Heart right ventricle (tissue), 16 donors: ENCODE measurements at regions of chr16 and their contacts with region 1.

Region 1: DNA sequence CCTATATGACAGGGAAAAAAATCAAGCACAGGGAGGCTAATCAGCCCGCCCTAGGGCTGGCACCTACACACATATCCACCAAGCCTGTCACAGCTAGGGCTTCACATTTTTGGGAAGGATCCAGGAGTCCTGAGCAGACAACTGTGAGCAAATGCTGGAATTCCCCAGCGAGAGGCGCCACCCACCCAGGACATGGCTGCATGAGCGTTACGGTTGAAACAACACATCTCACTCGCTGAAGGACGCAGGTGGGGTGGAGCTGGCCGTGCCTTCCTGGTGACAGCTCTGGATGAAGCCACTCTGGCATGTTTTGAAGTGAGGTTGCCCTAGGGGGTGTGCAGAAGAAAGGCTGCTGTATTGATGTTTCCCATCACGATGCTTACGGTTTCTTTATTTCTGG is 315.1 kb upstream of the EEF2KMT start:
- DNase-seq: no peak
- ATAC-seq: no peak
- H3K4me3 ChIP-seq: no peak overlapping the region
- H3K27ac ChIP-seq: no peak overlapping the region
- H3K4me1 ChIP-seq: no peaks in the 10 kb centered on the region
- H3K27me3 ChIP-seq: peaks cover 0 to 3% (median 0%) of the 10 kb centered on the region in 7 donors
- CTCF ChIP-seq: no peak

Region 2: DNA sequence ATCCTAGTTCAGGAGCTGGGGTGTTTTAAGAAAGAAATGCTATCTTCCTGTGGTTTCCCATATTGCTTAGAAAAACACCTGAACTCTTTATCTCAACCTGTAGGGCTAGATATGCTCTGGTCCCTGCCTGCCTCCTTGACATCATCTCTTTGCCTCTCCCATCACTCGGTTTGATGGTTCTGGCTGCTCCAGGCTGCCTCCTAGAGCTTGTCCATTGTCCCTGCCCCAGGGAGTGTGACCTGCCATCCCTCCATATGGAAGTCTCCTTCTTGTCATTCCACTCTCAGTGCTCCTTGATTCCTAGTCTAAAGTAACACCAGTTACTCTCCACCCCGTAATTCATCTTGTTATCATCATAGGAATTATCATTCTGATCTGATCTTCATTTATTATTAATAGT is 53.8 kb after region 1 on chr16:
- intact Hi-C with region 1: loop called in 1 of 10 experiments (anchors 10 kb)
- DNase-seq: no peak
- ATAC-seq: no peak
- H3K4me3 ChIP-seq: no peak overlapping the region
- H3K27ac ChIP-seq: no peak overlapping the region
- H3K4me1 ChIP-seq: no peaks in the 10 kb centered on the region
- H3K27me3 ChIP-seq: peaks cover 0 to 18% (median 3%) of the 10 kb centered on the region in 7 donors
- CTCF ChIP-seq: no peak

Region 3: GRCh38 chr16:5551909-5552308 is 139.2 kb after region 1 on chr16:
- intact Hi-C with region 1: no loop called
- DNase-seq: no peak
- ATAC-seq: no peak
- H3K4me3 ChIP-seq: no peak overlapping the region
- H3K27ac ChIP-seq: no peak overlapping the region
- H3K4me1 ChIP-seq: no peaks in the 10 kb centered on the region
- H3K27me3 ChIP-seq: peaks cover 0 to 5% (median 0%) of the 10 kb centered on the region in 7 donors
- CTCF ChIP-seq: no peak

Region 4: GRCh38 chr16:5730783-5731385 is 318.2 kb after region 1 on chr16:
- intact Hi-C with region 1: loop called in 1 of 10 experiments (anchors 5 kb)
- DNase-seq: no peak
- ATAC-seq: no peak
- H3K4me3 ChIP-seq: no peak overlapping the region
- H3K27ac ChIP-seq: no peak overlapping the region
- H3K4me1 ChIP-seq: no peaks in the 10 kb centered on the region
- H3K27me3 ChIP-seq: no peaks in the 10 kb centered on the region
- CTCF ChIP-seq: no peak